Gastrocnemius medialis (tissue), 4 donors: ENCODE measurements at regions of chr11 and their contacts with region 1.

Region 1: DNA sequence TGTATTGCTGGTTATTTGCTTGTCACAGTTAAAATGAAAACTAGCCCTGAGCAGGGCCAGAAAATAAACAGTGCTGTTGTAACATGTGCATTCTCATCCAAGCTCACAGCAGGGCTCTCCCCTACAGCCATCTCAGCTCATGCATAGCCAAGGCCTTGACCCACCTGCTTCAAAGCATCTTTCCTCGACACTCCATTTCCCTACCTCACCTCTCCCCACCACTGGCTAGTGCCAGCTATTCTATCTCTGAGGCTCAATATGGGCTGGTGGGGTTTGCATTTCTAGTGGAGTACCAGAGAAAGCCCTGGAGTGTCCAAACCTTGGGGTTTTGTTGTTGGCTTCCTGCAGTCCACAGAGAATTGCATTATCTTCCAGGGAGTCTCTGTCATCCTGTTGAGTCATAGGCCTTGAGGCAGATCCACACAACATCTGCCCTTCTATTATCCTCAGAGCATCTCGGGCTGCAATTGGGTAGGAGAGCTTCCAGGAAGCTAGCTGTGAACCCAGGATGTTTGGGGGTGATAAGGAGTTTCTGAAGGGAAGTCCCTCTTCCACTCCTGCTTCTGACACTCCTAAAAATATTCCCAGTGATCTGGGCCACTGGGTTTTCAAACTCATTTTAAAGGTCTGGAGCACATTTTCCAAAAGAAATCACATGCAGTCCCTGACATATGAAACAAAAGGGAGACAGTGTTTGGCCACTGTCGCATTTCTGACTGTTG is 36.1 kb upstream of the AMOTL1 start:
- DNase-seq: peak in 1 of 2 donors; percentile 30
- ATAC-seq: peak; percentile 65 to 79
- H3K4me3 ChIP-seq: no peak overlapping the region
- H3K27ac ChIP-seq: peak overlapping the region; percentile 41 to 79 (median 71)
- H3K4me1 ChIP-seq: peaks cover 18 to 33% of the 10 kb centered on the region in 2 donors
- H3K27me3 ChIP-seq: no peaks in the 10 kb centered on the region
- CTCF ChIP-seq: no peak
- POLR2A ChIP-seq: no peak

Region 2: GRCh38 chr11:94656968-94657367 is 75.1 kb before region 1 on chr11:
- in situ Hi-C with region 1: no loop called
- intact Hi-C with region 1: loop called (anchors 5 kb)
- DNase-seq: no peak
- ATAC-seq: no peak
- H3K4me3 ChIP-seq: no peak overlapping the region
- H3K27ac ChIP-seq: no peak overlapping the region
- H3K4me1 ChIP-seq: peaks cover 0 to 10% of the 10 kb centered on the region in 2 donors
- H3K27me3 ChIP-seq: no peaks in the 10 kb centered on the region
- CTCF ChIP-seq: no peak
- POLR2A ChIP-seq: no peak